ENCODE measurements at regions of chr19 and their contacts with region 1.

Region 1: GRCh38 chr19:39539519-39540332 is at the start of gene EID2:
- DNase-seq: peak; percentile 99
- ATAC-seq: peak; percentile 93 to 98
- H3K4me3 ChIP-seq: peak within 1 kb of the TSS; percentile 68
- H3K27ac ChIP-seq: peak within 1 kb of the TSS; percentile 88 to 89
- H3K4me1 ChIP-seq: peaks cover 15% of the 10 kb centered on the region
- CTCF ChIP-seq: peak; percentile 90
- EP300 ChIP-seq: no peak
- POLR2A ChIP-seq: peak; percentile 98
- RAD21 ChIP-seq: peak; percentile 71 to 72
- polyA plus RNA-seq, gene EID2: 23.2 and 26.1 TPM in 2 replicates

Region 2: DNA sequence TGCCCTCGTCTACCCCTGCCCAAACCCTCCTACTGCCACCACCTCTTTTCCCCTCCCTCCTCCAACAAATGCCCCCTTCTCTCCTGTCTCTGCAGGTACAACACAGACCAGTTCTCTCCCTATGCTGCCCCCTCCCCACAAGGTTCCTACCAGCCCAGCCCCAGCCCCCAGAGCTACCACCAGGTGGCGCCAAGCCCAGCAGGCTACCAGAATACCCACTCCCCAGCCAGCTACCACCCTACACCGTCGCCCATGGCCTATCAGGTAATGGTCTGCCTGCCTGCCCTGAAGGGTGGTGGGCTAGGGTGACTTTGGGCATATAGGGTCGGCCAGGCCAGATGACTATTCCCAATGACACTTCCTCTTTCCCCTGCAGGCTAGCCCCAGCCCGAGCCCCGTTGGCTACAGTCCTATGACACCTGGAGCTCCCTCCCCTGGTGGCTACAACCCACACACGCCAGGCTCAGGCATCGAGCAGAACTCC is 65.5 kb before region 1 on chr19:
- CTCF ChIA-PET with region 1: interaction called, 299 read pairs
- POLR2A ChIA-PET with region 1: no interaction called
- DNase-seq: peak; percentile 64 to 89
- ATAC-seq: peak; percentile 58 to 87; a peak in 5 of 6 replicates
- H3K4me3 ChIP-seq: no peak overlapping the region
- H3K27ac ChIP-seq: no peak overlapping the region
- H3K4me1 ChIP-seq: peaks cover 13% of the 10 kb centered on the region
- CTCF ChIP-seq: peak; percentile 97
- EP300 ChIP-seq: no peak
- POLR2A ChIP-seq: no peak
- RAD21 ChIP-seq: peak; percentile 61 to 69; a peak in 4 of 5 replicates

Region 3: DNA sequence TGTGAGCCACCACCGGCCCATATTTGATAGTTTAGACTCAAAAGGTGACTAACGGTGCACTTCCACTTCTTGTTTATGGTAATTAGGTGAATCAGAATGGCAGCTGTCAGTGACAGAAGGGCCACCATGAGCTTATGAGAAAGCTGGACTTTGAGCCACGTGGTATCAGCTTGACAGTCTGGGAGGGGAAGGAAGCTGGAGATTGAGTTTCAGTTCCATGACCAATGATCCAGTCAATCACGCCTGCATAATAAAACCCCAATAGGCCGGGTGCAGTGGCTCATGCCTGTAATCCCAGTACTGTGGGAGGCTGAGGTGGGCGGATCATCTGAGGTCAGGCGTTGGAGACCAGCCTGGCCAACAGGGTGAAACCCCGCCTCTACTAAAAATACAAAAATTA is 15.2 kb before region 1 on chr19:
- CTCF ChIA-PET with region 1: interaction called, 257 read pairs
- POLR2A ChIA-PET with region 1: interaction called, 11 read pairs
- DNase-seq: no peak
- ATAC-seq: no peak; a peak in 1 of 6 replicates
- H3K4me3 ChIP-seq: no peak overlapping the region
- H3K27ac ChIP-seq: no peak overlapping the region
- H3K4me1 ChIP-seq: peaks cover 5% of the 10 kb centered on the region; the same call in 2 of the 3 replicates
- CTCF ChIP-seq: no peak
- EP300 ChIP-seq: no peak
- POLR2A ChIP-seq: no peak
- RAD21 ChIP-seq: no peak

Region 4: DNA sequence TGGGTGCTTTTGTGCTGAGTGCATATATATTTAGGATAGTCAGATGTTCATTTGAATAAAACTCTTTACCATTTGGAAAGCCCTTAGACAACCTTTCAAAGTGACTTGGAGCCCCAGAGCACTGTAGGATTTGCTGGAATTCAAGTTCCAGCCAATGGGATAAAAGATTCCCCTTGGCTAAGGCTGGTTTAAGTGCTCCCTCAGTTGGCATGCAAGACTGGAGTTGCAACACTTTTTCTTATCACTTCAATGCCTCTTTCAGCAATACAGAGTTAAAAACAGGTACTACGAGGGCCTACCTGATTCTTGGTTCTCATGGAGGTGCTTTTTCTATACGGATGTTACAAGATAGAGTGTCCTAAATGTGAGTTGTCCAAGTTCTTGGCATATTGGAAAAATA is 36.8 kb after region 1 on chr19:
- CTCF ChIA-PET with region 1: no interaction called
- POLR2A ChIA-PET with region 1: no interaction called
- DNase-seq: no peak
- ATAC-seq: no peak
- H3K4me3 ChIP-seq: no peak overlapping the region
- H3K27ac ChIP-seq: no peak overlapping the region
- H3K4me1 ChIP-seq: no peaks in the 10 kb centered on the region
- CTCF ChIP-seq: no peak
- EP300 ChIP-seq: no peak
- POLR2A ChIP-seq: no peak
- RAD21 ChIP-seq: no peak

Region 5: DNA sequence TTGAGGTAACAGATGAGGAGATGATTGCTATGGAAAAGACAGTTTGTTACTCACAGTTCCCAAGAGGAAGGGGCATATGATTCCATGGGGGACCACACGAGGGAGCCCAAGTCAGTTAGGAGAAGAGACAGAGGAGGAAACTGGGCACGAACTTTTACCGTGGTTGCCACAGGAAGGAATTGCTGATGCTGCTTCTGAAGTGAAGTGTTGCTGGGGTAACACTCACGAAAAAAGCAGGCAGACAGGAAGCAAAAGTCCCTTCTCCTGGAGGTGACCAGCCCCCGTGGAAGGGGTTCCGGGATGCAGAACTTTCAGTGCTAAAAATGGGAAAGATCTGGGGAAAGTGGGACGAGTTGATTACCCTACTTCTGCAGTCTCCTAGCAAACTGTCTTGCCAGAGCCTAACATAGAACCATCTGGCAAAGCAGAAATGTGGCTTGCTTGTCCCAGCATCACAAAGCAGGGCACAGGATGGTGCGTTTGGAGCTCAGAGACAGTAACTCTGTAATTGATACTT is 616.1 kb after region 1 on chr19:
- CTCF ChIA-PET with region 1: no interaction called
- POLR2A ChIA-PET with region 1: interaction called, 12 read pairs
- DNase-seq: peak; percentile 80 to 84
- ATAC-seq: peak; percentile 87 to 93
- H3K4me3 ChIP-seq: no peak overlapping the region
- H3K27ac ChIP-seq: peak overlapping the region in 1 of 2 experiments; percentile 42; a peak in 3 of 6 replicates
- H3K4me1 ChIP-seq: no peaks in the 10 kb centered on the region
- CTCF ChIP-seq: peak; percentile 73
- EP300 ChIP-seq: no peak
- POLR2A ChIP-seq: no peak
- RAD21 ChIP-seq: peak; percentile 72 to 82

Measured in A549 (cell line).